AG04449 (cell line): ENCODE measurements at regions of chr18 and their contacts with region 1.

Region 1: GRCh38 chr18:45664824-45665763 is 49.8 kb downstream of the SLC14A2 start:
- DNase-seq: no peak
- H3K4me3 ChIP-seq: no peak overlapping the region
- CTCF ChIP-seq: peak; percentile 83

Region 2: DNA sequence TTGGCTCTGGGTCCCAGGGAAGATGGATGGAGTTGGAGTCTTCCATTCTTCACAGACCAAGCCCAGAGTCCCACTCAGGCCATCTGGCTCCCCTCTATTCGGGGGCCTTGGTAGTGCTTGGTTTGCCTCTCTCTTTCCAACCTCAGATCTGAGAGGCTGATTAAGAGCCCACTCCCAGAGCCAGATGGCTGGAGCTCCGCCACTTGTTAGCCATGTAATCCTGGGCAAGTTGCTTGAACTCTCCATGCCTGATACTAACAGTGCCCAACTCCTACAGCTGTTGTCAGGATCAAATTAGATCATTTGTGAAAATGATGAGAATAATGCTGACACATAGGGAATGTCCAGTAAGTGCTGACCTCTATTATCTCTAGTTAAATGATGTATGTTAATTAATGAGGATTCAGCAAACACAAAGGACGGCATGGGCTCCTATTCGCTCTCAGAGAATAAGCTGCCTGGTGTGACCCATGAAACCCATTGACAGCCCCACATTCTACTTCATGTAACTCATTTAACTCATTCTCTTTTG is 12.2 kb after region 1 on chr18:
- CTCF ChIA-PET with region 1: interaction called, 62 read pairs
- POLR2A ChIA-PET with region 1: no interaction called
- DNase-seq: no peak
- H3K4me3 ChIP-seq: no peak overlapping the region
- CTCF ChIP-seq: no peak

Region 3: DNA sequence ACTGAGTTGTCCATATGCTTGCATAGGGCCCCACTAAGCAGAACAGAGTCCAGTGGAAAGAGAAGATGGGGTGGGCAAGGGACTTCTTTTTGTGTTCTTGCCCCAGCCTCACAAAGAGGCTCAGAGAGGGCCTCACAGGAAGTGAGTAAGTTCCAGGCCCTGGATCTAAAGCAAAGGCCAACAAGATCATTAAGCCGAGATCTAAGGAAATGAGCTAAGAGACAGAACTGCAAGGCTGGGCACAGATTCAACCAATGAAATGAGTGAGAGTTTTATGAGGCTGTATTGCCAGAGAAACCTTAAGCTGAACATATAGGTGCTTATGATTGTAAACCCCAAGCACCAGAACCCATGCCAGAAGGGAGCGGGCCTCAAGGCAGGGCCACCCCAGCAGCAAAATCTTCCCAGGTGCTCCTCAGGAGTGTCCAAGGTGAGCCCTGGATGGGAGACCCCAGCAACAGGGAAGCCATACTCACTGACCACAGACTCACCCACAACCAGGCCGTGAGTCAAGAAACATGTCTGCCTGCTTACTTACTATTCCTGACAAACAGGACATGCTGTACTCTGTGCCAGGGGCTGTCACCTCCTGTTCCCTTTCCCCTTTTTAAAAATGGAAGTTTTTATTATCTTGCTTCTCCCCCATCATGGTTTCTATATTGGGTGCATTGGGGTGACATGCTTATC is 99.0 kb after region 1 on chr18:
- CTCF ChIA-PET with region 1: no interaction called
- POLR2A ChIA-PET with region 1: no interaction called
- DNase-seq: no peak
- H3K4me3 ChIP-seq: no peak overlapping the region
- CTCF ChIP-seq: no peak

Region 4: DNA sequence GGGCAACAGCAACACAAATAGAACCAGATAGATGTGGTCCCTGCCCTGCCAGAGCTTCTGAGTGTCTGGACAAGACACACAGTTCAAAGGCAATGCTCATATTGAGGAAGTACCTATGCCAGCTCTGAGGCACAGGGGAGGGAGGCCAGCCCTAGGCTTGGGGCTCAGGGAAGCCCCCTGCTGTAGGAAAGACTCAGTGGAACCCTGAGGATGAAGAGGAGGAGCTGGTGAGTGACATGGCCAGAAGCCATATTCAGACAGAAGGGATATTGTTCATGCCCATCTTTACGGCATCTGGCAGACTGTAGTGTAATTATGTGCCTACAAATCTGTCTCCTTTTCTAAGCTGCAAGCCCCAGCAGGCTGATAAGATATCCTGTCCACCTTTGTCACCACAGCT is 169.2 kb after region 1 on chr18:
- CTCF ChIA-PET with region 1: interaction called, 74 read pairs
- POLR2A ChIA-PET with region 1: no interaction called
- DNase-seq: no peak
- H3K4me3 ChIP-seq: no peak overlapping the region
- CTCF ChIP-seq: no peak

Region 5: GRCh38 chr18:45856531-45856930 is 191.4 kb after region 1 on chr18:
- CTCF ChIA-PET with region 1: interaction called, 13 read pairs
- POLR2A ChIA-PET with region 1: no interaction called
- DNase-seq: peak; percentile 42
- H3K4me3 ChIP-seq: no peak overlapping the region
- CTCF ChIP-seq: no peak

Region 6: DNA sequence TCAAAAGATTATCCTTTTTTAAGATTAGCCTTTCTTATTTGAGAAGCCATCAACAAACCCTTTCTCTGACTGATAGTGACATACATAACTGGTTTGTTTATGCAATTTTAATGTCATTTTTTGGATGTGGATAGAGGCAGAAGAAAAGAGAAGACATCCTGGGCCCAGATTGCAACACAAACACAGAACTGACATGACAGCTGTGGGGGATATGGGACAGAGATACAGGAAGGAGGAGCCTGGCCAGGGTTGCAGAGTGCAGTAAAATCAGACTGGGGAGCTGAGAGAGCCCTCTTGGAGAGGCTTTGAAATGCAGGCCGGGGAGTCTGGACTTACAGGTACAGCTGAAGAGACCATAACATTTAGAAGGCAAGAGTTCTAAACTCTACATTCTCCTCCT is 225.5 kb after region 1 on chr18:
- CTCF ChIA-PET with region 1: interaction called, 385 read pairs
- POLR2A ChIA-PET with region 1: no interaction called
- DNase-seq: no peak
- H3K4me3 ChIP-seq: no peak overlapping the region
- CTCF ChIP-seq: no peak

Region 7: DNA sequence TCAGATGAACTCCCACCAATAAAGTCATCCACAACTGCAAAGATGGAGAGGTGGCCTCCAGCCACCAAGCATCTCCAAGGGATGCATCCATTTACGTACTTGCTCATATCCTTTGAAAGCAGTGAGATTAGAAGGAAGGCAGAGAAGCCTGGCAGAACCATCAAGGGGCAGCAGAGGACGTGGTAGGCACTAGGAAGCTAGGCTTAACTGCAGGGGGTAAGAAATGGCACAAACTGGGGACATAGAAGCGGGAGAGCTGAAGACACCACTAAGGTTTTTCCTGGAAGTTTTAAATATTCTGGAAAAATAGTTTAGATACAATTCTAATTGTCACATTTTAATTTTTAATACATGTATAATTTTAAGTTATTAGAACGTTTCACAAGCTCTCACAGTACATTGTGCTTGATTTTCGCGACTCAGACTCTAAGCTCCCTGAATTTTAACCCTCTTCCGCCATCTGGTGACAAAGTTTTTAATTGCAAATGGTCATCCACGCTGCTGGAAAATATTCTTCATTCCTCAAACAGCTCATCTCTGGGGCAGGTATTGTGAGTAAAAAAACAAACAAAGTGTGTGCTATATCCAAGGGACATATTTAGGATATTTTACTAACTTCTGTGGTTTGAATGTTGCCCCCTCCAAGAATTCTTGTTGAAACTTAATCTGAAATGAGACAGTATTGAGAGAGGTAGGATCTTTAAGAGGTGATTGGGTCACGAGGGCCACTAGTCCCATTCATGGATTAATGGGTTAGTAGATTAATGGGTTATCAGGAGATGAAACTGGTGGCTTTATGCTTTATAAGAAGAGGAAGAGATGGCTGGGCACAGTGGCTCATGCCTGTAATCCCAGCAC is 408.6 kb after region 1 on chr18:
- CTCF ChIA-PET with region 1: interaction called, 102 read pairs
- POLR2A ChIA-PET with region 1: no interaction called
- DNase-seq: no peak
- H3K4me3 ChIP-seq: no peak overlapping the region
- CTCF ChIP-seq: peak; percentile 43